H1 (cell line): ENCODE measurements at regions of chr13 and their contacts with region 1.

Region 1: GRCh38 chr13:99442273-99442895 is 58.9 kb upstream of the TM9SF2 start:
- DNase-seq: no peak
- H3K4me3 ChIP-seq: no peak overlapping the region
- H3K27ac ChIP-seq: no peak overlapping the region
- H3K4me1 ChIP-seq: peaks cover 0 to 11% (median 7%) of the 10 kb centered on the region in 4 experiments; a peak in 4 of 7 replicates
- H3K27me3 ChIP-seq: no peaks in the 10 kb centered on the region
- CTCF ChIP-seq: peak; percentile 29 to 78 (median 74)
- EP300 ChIP-seq: no peak
- POLR2A ChIP-seq: no peak
- RAD21 ChIP-seq: peak; percentile 82 to 85

Region 2: GRCh38 chr13:99386911-99387788 is 55.2 kb before region 1 on chr13:
- CTCF ChIA-PET with region 1: interaction called, 227 read pairs
- POLR2A ChIA-PET with region 1: no interaction called
- DNase-seq: peak; percentile 31 to 95
- H3K4me3 ChIP-seq: no peak overlapping the region
- H3K27ac ChIP-seq: no peak overlapping the region
- H3K4me1 ChIP-seq: peaks cover 0 to 14% (median 3%) of the 10 kb centered on the region in 4 experiments; a peak in 3 of 7 replicates
- H3K27me3 ChIP-seq: no peaks in the 10 kb centered on the region
- CTCF ChIP-seq: peak; percentile 88 to 98 (median 88)
- EP300 ChIP-seq: no peak
- POLR2A ChIP-seq: no peak
- RAD21 ChIP-seq: peak; percentile 85 to 90

Region 3: DNA sequence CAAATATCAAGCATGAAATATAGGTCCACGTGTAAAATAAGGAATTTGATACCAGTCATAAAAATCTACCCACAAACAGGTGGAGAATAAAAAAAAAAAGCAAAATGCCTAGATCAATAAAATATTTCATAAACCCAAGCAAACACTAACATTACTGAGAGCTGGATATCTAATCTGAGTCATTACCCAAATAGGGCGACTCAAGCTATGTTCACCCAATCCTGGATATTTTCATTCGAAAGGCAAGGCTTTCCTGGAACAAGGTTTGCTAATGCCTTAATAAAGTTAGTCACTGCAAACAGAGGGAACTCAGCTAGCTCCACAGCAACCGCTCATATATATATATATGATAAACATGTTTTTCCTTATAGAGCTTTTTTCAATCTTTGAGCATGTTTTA is 25.4 kb after region 1 on chr13:
- CTCF ChIA-PET with region 1: interaction called, 17 read pairs
- POLR2A ChIA-PET with region 1: no interaction called
- DNase-seq: no peak
- H3K4me3 ChIP-seq: no peak overlapping the region
- H3K27ac ChIP-seq: no peak overlapping the region
- H3K4me1 ChIP-seq: peaks cover 0 to 4% (median 0%) of the 10 kb centered on the region in 4 experiments; a peak in 4 of 7 replicates
- H3K27me3 ChIP-seq: no peaks in the 10 kb centered on the region
- CTCF ChIP-seq: no peak
- EP300 ChIP-seq: no peak
- POLR2A ChIP-seq: no peak
- RAD21 ChIP-seq: no peak

Region 4: DNA sequence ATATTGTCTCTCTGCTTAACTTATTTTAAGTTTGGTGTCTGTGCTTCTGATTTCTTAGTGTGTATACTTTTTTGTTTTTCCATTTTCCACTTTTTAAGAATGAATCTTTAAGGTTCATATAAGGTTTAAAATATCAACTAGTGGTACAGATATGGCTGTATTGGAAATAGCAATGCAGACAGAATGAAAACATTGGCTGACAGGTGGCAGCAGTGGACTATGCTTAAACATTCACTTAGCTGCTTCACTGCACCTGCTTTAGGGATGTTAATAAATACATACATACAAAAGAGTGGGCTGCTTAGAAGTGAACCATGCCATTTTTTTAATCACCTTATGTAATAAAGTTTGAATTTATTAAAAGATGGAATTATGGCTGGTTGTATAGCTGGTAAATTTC is 86.2 kb after region 1 on chr13:
- CTCF ChIA-PET with region 1: interaction called, 13 read pairs
- POLR2A ChIA-PET with region 1: no interaction called
- DNase-seq: no peak
- H3K4me3 ChIP-seq: no peak overlapping the region
- H3K27ac ChIP-seq: no peak overlapping the region
- H3K4me1 ChIP-seq: peaks cover 0 to 2% (median 0%) of the 10 kb centered on the region in 4 experiments; a peak in 1 of 7 replicates
- H3K27me3 ChIP-seq: no peaks in the 10 kb centered on the region
- CTCF ChIP-seq: no peak
- EP300 ChIP-seq: no peak
- POLR2A ChIP-seq: no peak
- RAD21 ChIP-seq: peak; percentile 28 to 33

Region 5: GRCh38 chr13:99577934-99578917 is 135.8 kb after region 1 on chr13:
- CTCF ChIA-PET with region 1: interaction called, 13 read pairs
- POLR2A ChIA-PET with region 1: no interaction called
- DNase-seq: no peak
- H3K4me3 ChIP-seq: no peak overlapping the region
- H3K27ac ChIP-seq: no peak overlapping the region
- H3K4me1 ChIP-seq: no peaks in the 10 kb centered on the region; a peak in 1 of 7 replicates
- H3K27me3 ChIP-seq: no peaks in the 10 kb centered on the region
- CTCF ChIP-seq: peak in 2 of 3 experiments; percentile 25 to 31; a peak in 2 of 4 replicates
- EP300 ChIP-seq: no peak
- POLR2A ChIP-seq: no peak
- RAD21 ChIP-seq: peak; percentile 40 to 52